ENCODE measurements at regions of chr16 and their contacts with region 1.

Region 1: GRCh38 chr16:19926449-19927390 is 42.1 kb upstream of the GPRC5B start:
- DNase-seq: peak; percentile 8
- H3K4me3 ChIP-seq: no peak overlapping the region
- H3K27ac ChIP-seq: no peak overlapping the region
- H3K4me1 ChIP-seq: no peaks in the 10 kb centered on the region
- H3K27me3 ChIP-seq: no peaks in the 10 kb centered on the region
- CTCF ChIP-seq: no peak

Region 2: DNA sequence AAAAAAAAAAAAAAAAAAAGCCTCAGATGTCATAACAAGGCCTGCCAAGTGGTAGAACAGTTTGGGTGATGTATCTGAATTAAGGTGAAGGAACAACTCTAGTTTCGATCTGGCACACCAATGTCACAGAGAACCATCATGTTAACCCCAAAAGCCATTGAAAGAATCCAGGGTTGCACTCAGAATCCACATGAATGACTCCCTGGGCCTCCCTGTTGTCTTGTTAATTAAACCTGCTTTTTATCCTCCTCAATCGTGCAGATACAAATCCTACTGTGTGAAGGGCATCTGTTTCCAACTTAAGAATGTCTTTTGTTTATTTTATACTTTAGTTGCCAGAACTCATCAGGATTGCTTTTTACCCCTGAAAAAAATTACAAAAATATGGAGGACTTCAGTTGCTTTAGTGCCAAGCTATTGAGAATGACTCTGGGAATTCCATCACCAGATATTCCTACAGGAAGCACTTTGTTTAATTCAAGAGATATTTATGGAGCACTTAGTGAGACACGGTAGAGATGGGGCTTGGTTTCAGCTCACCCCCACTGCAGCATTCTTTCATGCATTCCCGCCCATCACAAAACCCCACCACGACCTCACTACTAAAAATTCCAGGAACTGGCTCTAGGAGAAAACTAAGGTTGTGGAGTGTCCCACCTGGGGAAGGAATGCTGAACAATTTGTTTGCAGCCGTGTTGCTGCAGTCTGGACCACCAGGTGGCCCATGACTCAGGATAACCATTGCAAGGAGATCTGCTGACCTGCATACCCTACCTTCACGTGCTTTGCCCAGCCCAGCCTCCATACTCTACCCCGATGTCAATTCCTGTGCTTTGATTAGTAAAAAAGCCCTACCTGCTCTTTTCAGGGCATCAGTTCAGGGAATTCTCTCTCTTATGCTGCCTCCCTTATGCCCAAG is 21.7 kb after region 1 on chr16:
- CTCF ChIA-PET with region 1: no interaction called
- dilution Hi-C with region 1: no loop called
- in situ Hi-C with region 1: no loop called
- intact Hi-C with region 1: loop called (anchors 1 kb)
- DNase-seq: no peak
- H3K4me3 ChIP-seq: no peak overlapping the region
- H3K27ac ChIP-seq: no peak overlapping the region
- H3K4me1 ChIP-seq: no peaks in the 10 kb centered on the region
- H3K27me3 ChIP-seq: peaks cover 1% of the 10 kb centered on the region
- CTCF ChIP-seq: no peak